ENCODE measurements at regions of chr5 and their contacts with region 1.

Region 1: GRCh38 chr5:177462021-177462670 is 11.3 kb downstream of the DBN1 start:
- DNase-seq: peak; percentile 57
- H3K4me3 ChIP-seq: no peak overlapping the region
- H3K27ac ChIP-seq: peak overlapping the region; percentile 63
- H3K4me1 ChIP-seq: peaks cover 17% of the 10 kb centered on the region
- H3K27me3 ChIP-seq: no peaks in the 10 kb centered on the region
- CTCF ChIP-seq: no peak
- POLR2A ChIP-seq: peak; percentile 52

Region 2: GRCh38 chr5:177473461-177474001 is 11.4 kb after region 1 on chr5 and contains the start of gene DBN1:
- CTCF ChIA-PET with region 1: interaction called, 57 read pairs
- POLR2A ChIA-PET with region 1: interaction called, 5 read pairs
- dilution Hi-C with region 1: no loop called
- intact Hi-C with region 1: loop called (anchors 1 kb)
- DNase-seq: peak; percentile 30
- H3K4me3 ChIP-seq: peak within 1 kb of the TSS; percentile 58 to 82 (median 72)
- H3K27ac ChIP-seq: peak within 1 kb of the TSS; percentile 42
- H3K4me1 ChIP-seq: peaks cover 31% of the 10 kb centered on the region
- H3K27me3 ChIP-seq: no peaks in the 10 kb centered on the region
- CTCF ChIP-seq: no peak
- POLR2A ChIP-seq: peak; percentile 33
- total RNA-seq, gene DBN1: 310 and 336 TPM in 2 replicates

Measured in endothelial cell of umbilical vein (primary cell).